Dorsolateral prefrontal cortex (tissue), 120 donors: ENCODE measurements at regions of chr7 and their contacts with region 1.

Region 1: DNA sequence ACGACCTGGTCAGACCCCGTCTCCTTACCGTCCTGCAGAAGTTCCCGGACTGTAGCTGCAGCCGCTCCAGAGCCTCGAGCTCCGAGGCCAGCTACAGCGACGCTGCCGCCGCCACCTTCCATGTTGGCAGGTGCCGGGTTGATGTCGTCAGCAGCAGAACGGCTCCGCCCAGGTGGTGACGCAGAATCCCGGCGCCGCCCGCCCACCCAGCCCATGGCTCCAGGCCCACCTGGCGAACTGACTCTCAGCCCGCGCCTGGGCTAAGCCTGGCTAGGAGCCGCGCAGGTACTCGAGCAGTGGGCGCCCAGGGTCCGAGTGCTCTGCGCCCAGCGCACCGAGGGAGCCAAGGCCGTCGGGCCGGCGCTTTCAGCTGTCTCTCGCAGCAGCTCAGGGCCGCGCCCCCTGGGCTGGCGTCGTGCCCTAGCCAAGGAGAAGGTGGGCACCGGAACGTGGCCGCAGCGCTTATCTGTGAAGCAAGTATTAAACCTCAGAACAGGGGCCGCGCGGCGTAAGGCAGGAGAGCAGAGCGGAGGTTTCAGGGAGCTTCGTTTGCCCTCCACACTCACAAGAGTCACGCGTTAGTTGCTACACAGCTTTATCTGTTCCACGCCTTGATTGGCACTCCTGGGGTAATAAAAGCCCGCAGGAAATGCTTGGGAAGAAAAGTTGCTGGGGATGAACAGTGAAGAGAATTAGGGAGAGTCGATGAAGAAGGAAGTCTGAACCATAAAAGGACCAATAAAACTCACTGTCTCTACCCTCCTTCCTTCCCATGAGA is at the starts of genes COG5 and DUS4L:
- DNase-seq: peak; percentile 66 to 87 (median 78)
- H3K4me3 ChIP-seq: peak within 1 kb of the TSS; percentile 66 to 99 (median 93)
- H3K27ac ChIP-seq: peak within 1 kb of the TSS; percentile 59 to 98 (median 88)
- H3K27me3 ChIP-seq: no peaks in the 10 kb centered on the region
- CTCF ChIP-seq: peak in 17 of 56 donors; percentile 3 to 32 (median 19)
- total RNA-seq, gene COG5: 37.1 to 87.3 (median 52.6) TPM
- total RNA-seq, gene DUS4L: 5.6 to 15.9 (median 10.8) TPM

Region 2: GRCh38 chr7:107372298-107372697 is 191.7 kb before region 1 on chr7:
- intact Hi-C with region 1: no loop called
- DNase-seq: no peak
- H3K4me3 ChIP-seq: no peak overlapping the region
- H3K27ac ChIP-seq: peak overlapping the region in 20 of 59 donors; percentile 3 to 63 (median 34)
- H3K27me3 ChIP-seq: no peaks in the 10 kb centered on the region
- CTCF ChIP-seq: no peak

Region 3: GRCh38 chr7:107462740-107463444 is 101.1 kb before region 1 on chr7:
- intact Hi-C with region 1: loop called in 1 of 2 experiments (anchors 10 kb)
- DNase-seq: peak in 9 of 10 donors; percentile 38 to 69 (median 59)
- H3K4me3 ChIP-seq: no peak overlapping the region
- H3K27ac ChIP-seq: peak overlapping the region in 14 of 59 donors; percentile 1 to 63 (median 32)
- H3K27me3 ChIP-seq: no peaks in the 10 kb centered on the region
- CTCF ChIP-seq: peak; percentile 34 to 89 (median 72)

Region 4: GRCh38 chr7:107579885-107580715 is 16.1 kb after region 1 on chr7 and contains the start of gene BCAP29:
- intact Hi-C with region 1: loop called in 1 of 2 experiments (anchors 2 kb)
- DNase-seq: peak; percentile 38 to 78 (median 56)
- H3K4me3 ChIP-seq: peak within 1 kb of the TSS; percentile 62 to 98 (median 84)
- H3K27ac ChIP-seq: peak within 1 kb of the TSS; percentile 63 to 96 (median 86)
- H3K27me3 ChIP-seq: no peaks in the 10 kb centered on the region
- CTCF ChIP-seq: peak in 40 of 56 donors; percentile 10 to 57 (median 36)
- total RNA-seq, gene BCAP29: 61.4 to 148 (median 112) TPM

Region 5: GRCh38 chr7:107638594-107638993 is 74.6 kb after region 1 on chr7:
- intact Hi-C with region 1: no loop called
- DNase-seq: no peak
- H3K4me3 ChIP-seq: no peak overlapping the region
- H3K27ac ChIP-seq: no peak overlapping the region
- H3K27me3 ChIP-seq: no peaks in the 10 kb centered on the region
- CTCF ChIP-seq: no peak

Region 6: GRCh38 chr7:107694386-107694785 is 130.4 kb after region 1 on chr7:
- intact Hi-C with region 1: no loop called
- DNase-seq: peak in 2 of 10 donors; percentile 8 to 35
- H3K4me3 ChIP-seq: peak overlapping the region in 21 of 59 donors; percentile 1 to 47 (median 20)
- H3K27ac ChIP-seq: peak overlapping the region in 57 of 59 donors; percentile 16 to 93 (median 75)
- H3K27me3 ChIP-seq: no peaks in the 10 kb centered on the region
- CTCF ChIP-seq: no peak

Region 7: GRCh38 chr7:107890962-107891635 is 327.1 kb after region 1 on chr7 and contains the start of gene DLD:
- intact Hi-C with region 1: loop called in 1 of 2 experiments (anchors 10 kb)
- DNase-seq: peak; percentile 93 to 98 (median 96)
- H3K4me3 ChIP-seq: peak within 1 kb of the TSS; percentile 61 to 98 (median 87)
- H3K27ac ChIP-seq: peak within 1 kb of the TSS; percentile 60 to 99 (median 91)
- H3K27me3 ChIP-seq: no peaks in the 10 kb centered on the region
- CTCF ChIP-seq: peak in 39 of 56 donors; percentile 7 to 58 (median 28)
- total RNA-seq, gene DLD: 37.6 to 101 (median 76.6) TPM